Ovary (tissue), 10 donors: ENCODE measurements at regions of chr4 and their contacts with region 1.

Region 1: GRCh38 chr4:71713611-71714203 is 70.2 kb downstream of the GC start:
- DNase-seq: no peak
- H3K4me3 ChIP-seq: no peak overlapping the region
- H3K27ac ChIP-seq: no peak overlapping the region
- H3K4me1 ChIP-seq: no peaks in the 10 kb centered on the region
- H3K27me3 ChIP-seq: no peaks in the 10 kb centered on the region
- CTCF ChIP-seq: peak in 2 of 3 donors; percentile 12 to 46
- EP300 ChIP-seq: no peak
- POLR2A ChIP-seq: no peak

Region 2: GRCh38 chr4:70651864-70652506 is 1061.7 kb before region 1 on chr4:
- intact Hi-C with region 1: loop called in 1 of 4 experiments (anchors 10 kb)
- DNase-seq: no peak
- H3K4me3 ChIP-seq: no peak overlapping the region
- H3K27ac ChIP-seq: no peak overlapping the region
- H3K4me1 ChIP-seq: no peaks in the 10 kb centered on the region
- H3K27me3 ChIP-seq: no peaks in the 10 kb centered on the region
- CTCF ChIP-seq: peak; percentile 29 to 57 (median 57)
- EP300 ChIP-seq: no peak
- POLR2A ChIP-seq: no peak

Region 3: DNA sequence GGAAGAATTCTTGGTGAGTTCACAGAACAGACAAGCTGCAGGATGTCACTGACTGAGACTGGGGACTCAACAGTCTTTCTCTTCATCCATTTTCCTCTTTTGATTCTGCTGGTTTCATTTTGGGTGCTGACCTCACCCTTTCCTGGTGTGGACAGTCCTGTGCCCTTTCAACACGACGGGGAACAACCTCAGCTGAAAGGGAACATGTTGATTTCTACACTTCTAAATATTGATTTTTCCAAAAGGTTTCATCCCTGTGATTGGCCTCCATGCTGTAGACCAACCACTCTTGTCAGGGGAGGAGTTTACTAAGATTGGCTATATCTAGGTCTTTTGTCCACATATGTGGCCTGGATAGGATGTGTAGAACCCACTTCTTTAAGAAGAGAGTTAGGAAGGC is 283.1 kb before region 1 on chr4:
- intact Hi-C with region 1: loop called in 1 of 4 experiments (anchors 5 kb)
- DNase-seq: no peak
- H3K4me3 ChIP-seq: no peak overlapping the region
- H3K27ac ChIP-seq: no peak overlapping the region
- H3K4me1 ChIP-seq: no peaks in the 10 kb centered on the region
- H3K27me3 ChIP-seq: no peaks in the 10 kb centered on the region
- CTCF ChIP-seq: no peak
- EP300 ChIP-seq: no peak
- POLR2A ChIP-seq: no peak

Region 4: GRCh38 chr4:72410158-72410557 is 696.5 kb after region 1 on chr4:
- intact Hi-C with region 1: no loop called
- DNase-seq: no peak
- H3K4me3 ChIP-seq: no peak overlapping the region
- H3K27ac ChIP-seq: no peak overlapping the region
- H3K4me1 ChIP-seq: no peaks in the 10 kb centered on the region
- H3K27me3 ChIP-seq: no peaks in the 10 kb centered on the region
- CTCF ChIP-seq: no peak
- EP300 ChIP-seq: no peak
- POLR2A ChIP-seq: no peak